HepG2 (cell line): ENCODE measurements at regions of chr1 and their contacts with region 1.

Region 1: DNA sequence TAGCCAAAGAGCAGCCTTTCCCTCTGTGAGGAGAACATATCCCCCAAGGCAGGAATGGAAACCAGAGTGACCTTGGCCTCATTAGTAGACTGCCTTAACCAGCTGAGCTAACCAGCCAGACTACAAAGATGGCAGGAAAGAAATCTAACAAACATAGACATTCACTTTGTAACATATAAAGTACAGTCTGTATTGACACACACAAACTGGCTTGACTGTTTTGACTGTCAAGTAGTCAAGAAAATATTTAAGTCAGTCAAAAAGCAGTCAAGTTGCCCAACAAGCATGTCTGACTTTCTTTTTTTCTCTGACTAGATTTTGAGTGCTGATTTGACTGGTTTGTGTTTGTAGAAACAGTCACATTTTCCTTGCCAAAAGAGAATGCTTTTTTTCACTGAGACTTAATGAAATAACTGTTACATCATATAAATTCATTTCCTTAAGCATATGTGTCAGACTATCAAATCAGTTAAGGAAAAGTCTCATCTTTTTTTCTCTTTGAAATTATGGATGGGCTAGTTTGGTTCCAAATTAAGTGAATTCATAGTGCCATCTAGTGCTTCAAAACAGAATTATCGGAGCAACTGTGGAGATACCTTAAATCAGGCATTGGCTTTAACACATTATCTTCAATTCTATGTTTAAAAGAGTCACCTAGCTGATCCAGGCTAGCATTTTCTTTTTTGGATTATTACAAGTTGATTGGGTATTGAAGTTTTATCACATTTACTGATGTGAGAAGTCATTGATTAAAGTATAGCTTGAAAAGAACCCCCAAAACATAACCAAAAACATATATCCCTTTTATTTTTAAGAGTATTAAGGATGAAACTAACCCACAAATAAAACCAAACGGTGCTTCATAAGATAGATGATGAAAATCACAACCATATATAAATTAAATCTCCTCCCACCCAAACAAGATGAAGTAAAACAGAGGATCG is 75.0 kb downstream of the ATP6V1G3 start:
- DNase-seq: peak; percentile 28
- ATAC-seq: peak; percentile 64; the same call in 2 of the 3 replicates
- H3K4me3 ChIP-seq: no peak overlapping the region
- H3K27ac ChIP-seq: no peak overlapping the region
- H3K4me1 ChIP-seq: no peaks in the 10 kb centered on the region
- H3K27me3 ChIP-seq: no peaks in the 10 kb centered on the region; a peak in 1 of 5 replicates
- CTCF ChIP-seq: peak; percentile 64
- EP300 ChIP-seq: no peak
- POLR2A ChIP-seq: no peak
- RAD21 ChIP-seq: no peak

Region 2: GRCh38 chr1:197399755-197400527 is 1065.5 kb before region 1 on chr1:
- CTCF ChIA-PET with region 1: no interaction called
- POLR2A ChIA-PET with region 1: no interaction called
- in situ Hi-C with region 1: no loop called
- intact Hi-C with region 1: loop called (anchors 10 kb)
- DNase-seq: peak; percentile 59
- ATAC-seq: peak; percentile 81
- H3K4me3 ChIP-seq: no peak overlapping the region
- H3K27ac ChIP-seq: no peak overlapping the region
- H3K4me1 ChIP-seq: no peaks in the 10 kb centered on the region
- H3K27me3 ChIP-seq: no peaks in the 10 kb centered on the region
- CTCF ChIP-seq: peak; percentile 47
- EP300 ChIP-seq: no peak
- POLR2A ChIP-seq: no peak
- RAD21 ChIP-seq: no peak

Region 3: DNA sequence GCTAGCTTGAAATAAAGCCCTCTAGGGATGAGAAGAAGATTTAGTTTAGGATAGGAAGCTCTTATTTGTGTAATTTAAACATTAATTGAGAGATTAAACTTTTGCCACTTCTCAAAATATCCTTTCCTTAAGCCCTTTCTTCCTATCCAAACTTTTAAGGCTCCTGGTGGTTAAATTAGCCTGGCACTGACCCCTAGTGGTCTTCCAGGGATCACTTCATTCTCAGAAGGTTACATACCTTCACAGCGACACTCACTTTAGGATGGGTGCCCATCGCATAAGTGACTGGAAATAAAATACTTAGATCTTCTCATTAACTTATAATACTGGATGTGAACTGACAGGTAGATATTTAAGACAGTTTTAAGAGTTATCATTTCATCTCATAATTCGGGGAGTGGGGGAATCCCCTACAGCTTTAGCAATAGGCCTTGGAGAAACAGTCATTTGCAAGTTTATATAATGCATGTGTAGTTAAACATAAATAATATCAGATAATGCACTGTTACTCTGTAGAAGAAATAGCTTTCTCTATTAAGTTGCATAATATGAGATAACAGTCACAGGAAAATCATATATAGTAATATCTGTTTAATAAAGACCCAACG is 540.9 kb before region 1 on chr1:
- CTCF ChIA-PET with region 1: interaction called, 5 read pairs
- POLR2A ChIA-PET with region 1: no interaction called
- in situ Hi-C with region 1: no loop called
- intact Hi-C with region 1: loop called (anchors 5 kb)
- DNase-seq: peak; percentile 53
- ATAC-seq: peak; percentile 81
- H3K4me3 ChIP-seq: no peak overlapping the region
- H3K27ac ChIP-seq: no peak overlapping the region
- H3K4me1 ChIP-seq: no peaks in the 10 kb centered on the region
- H3K27me3 ChIP-seq: peaks cover 0 to 5% of the 10 kb centered on the region in 2 experiments; a peak in 4 of 5 replicates
- CTCF ChIP-seq: peak; percentile 77
- EP300 ChIP-seq: no peak
- POLR2A ChIP-seq: no peak
- RAD21 ChIP-seq: peak; percentile 51; the same call in 1 of the 2 replicates

Region 4: GRCh38 chr1:198088360-198089071 is 377.0 kb before region 1 on chr1:
- CTCF ChIA-PET with region 1: interaction called, 13 read pairs
- POLR2A ChIA-PET with region 1: no interaction called
- in situ Hi-C with region 1: loop called (anchors 25 kb)
- intact Hi-C with region 1: loop called (anchors 1 kb)
- DNase-seq: peak; percentile 7
- ATAC-seq: no peak
- H3K4me3 ChIP-seq: no peak overlapping the region
- H3K27ac ChIP-seq: no peak overlapping the region
- H3K4me1 ChIP-seq: peaks cover 15% of the 10 kb centered on the region
- H3K27me3 ChIP-seq: no peaks in the 10 kb centered on the region
- CTCF ChIP-seq: peak; percentile 47
- EP300 ChIP-seq: no peak
- POLR2A ChIP-seq: no peak
- RAD21 ChIP-seq: no peak

Region 5: GRCh38 chr1:198681831-198682759 is 216.6 kb after region 1 on chr1:
- CTCF ChIA-PET with region 1: no interaction called
- POLR2A ChIA-PET with region 1: no interaction called
- in situ Hi-C with region 1: no loop called
- intact Hi-C with region 1: loop called (anchors 10 kb)
- DNase-seq: no peak
- ATAC-seq: no peak
- H3K4me3 ChIP-seq: no peak overlapping the region
- H3K27ac ChIP-seq: no peak overlapping the region
- H3K4me1 ChIP-seq: no peaks in the 10 kb centered on the region
- H3K27me3 ChIP-seq: no peaks in the 10 kb centered on the region
- CTCF ChIP-seq: no peak
- EP300 ChIP-seq: no peak
- POLR2A ChIP-seq: no peak
- RAD21 ChIP-seq: no peak